Activated CD8-positive, alpha-beta T cell treated with anti-CD3 and anti-CD28 coated beads for 36 hours (primary cell): ENCODE measurements at regions of chr15 and their contacts with region 1.

Region 1: DNA sequence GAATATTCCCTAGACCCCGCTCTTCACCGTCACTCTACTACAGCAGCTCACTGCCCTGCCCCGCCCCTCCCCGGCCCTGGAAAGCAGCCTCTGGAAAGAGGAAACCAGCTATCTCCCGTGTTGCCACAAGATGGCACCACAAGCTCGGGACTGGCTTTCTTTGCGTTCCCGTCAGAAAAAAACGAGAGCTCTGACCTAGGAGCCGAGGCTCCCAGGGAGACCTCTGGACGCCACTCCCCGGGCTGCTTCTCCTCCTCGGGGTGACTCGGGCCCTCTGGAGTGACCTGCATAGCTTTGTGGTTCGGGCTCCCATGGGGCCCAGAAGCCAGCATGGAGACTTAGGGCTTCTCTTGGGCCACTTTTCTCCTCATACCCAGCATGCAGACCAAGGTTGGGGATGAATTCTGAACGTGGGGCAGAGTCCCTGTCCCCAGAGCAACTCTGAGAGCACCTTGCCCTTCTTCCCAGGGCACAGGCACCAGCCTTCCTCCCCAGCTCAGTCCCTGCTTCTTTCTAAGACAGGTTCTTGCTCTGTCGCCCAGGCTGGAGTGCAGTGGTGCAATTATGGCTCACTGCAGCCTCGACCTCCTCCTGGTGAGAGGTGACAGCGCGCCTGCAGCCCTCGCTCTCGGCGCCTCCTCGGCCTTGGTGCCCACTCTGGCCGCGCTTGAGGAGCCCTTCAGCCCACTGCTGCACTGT is 19.0 kb downstream of the STOML1 start:
- DNase-seq: peak; percentile 91
- ATAC-seq: peak; percentile 85
- H3K4me3 Mint-ChIP-seq: no peak overlapping the region
- H3K27ac Mint-ChIP-seq: no peak overlapping the region
- H3K4me1 Mint-ChIP-seq: peaks cover 23% of the 10 kb centered on the region
- H3K27me3 Mint-ChIP-seq: peaks cover 15% of the 10 kb centered on the region
- CTCF ChIP-seq: peak; percentile 72

Region 2: GRCh38 chr15:73697033-73697467 is 276.1 kb before region 1 on chr15:
- CTCF ChIA-PET with region 1: no interaction called
- POLR2A ChIA-PET with region 1: no interaction called
- intact Hi-C with region 1: no loop called
- DNase-seq: peak; percentile 92
- ATAC-seq: peak; percentile 93
- H3K4me3 Mint-ChIP-seq: no peak overlapping the region
- H3K27ac Mint-ChIP-seq: no peak overlapping the region
- H3K4me1 Mint-ChIP-seq: peaks cover 19% of the 10 kb centered on the region
- H3K27me3 Mint-ChIP-seq: peaks cover 58% of the 10 kb centered on the region
- CTCF ChIP-seq: no peak

Region 3: GRCh38 chr15:73936181-73936580 is 37.0 kb before region 1 on chr15:
- CTCF ChIA-PET with region 1: interaction called, 11 read pairs
- POLR2A ChIA-PET with region 1: no interaction called
- intact Hi-C with region 1: no loop called
- DNase-seq: no peak
- ATAC-seq: no peak
- H3K4me3 Mint-ChIP-seq: no peak overlapping the region
- H3K27ac Mint-ChIP-seq: no peak overlapping the region
- H3K4me1 Mint-ChIP-seq: no peaks in the 10 kb centered on the region
- H3K27me3 Mint-ChIP-seq: peaks cover 2% of the 10 kb centered on the region
- CTCF ChIP-seq: no peak

Region 4: DNA sequence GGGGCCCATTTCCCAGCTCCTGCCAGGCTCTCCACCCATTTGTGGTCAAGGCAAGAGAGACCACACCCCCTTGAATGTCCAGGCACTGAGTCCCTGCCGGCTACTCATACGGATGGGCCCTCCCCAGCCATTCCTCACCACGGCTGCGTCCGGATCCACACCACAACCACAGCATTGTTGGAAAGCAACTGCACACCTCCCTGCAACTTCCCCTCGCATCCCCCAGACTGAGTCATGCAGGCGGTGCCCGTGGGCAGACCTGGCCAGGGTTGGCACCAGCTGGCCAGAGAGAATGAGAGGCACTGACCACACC is 16.4 kb before region 1 on chr15:
- CTCF ChIA-PET with region 1: interaction called, 23 read pairs
- POLR2A ChIA-PET with region 1: interaction called, 4 read pairs
- intact Hi-C with region 1: no loop called
- DNase-seq: no peak
- ATAC-seq: no peak
- H3K4me3 Mint-ChIP-seq: no peak overlapping the region
- H3K27ac Mint-ChIP-seq: no peak overlapping the region
- H3K4me1 Mint-ChIP-seq: peaks cover 20% of the 10 kb centered on the region
- H3K27me3 Mint-ChIP-seq: no peaks in the 10 kb centered on the region
- CTCF ChIP-seq: no peak

Region 5: GRCh38 chr15:74011610-74012009 is 38.5 kb after region 1 on chr15:
- CTCF ChIA-PET with region 1: interaction called, 14 read pairs
- POLR2A ChIA-PET with region 1: interaction called, 5 read pairs
- intact Hi-C with region 1: no loop called
- DNase-seq: no peak
- ATAC-seq: no peak
- H3K4me3 Mint-ChIP-seq: no peak overlapping the region
- H3K27ac Mint-ChIP-seq: no peak overlapping the region
- H3K4me1 Mint-ChIP-seq: peaks cover 45% of the 10 kb centered on the region
- H3K27me3 Mint-ChIP-seq: no peaks in the 10 kb centered on the region
- CTCF ChIP-seq: no peak

Region 6: GRCh38 chr15:74044267-74045110 is 71.4 kb after region 1 on chr15:
- CTCF ChIA-PET with region 1: interaction called, 72 read pairs
- POLR2A ChIA-PET with region 1: no interaction called
- intact Hi-C with region 1: loop called (anchors 5 kb)
- DNase-seq: no peak
- ATAC-seq: no peak
- H3K4me3 Mint-ChIP-seq: no peak overlapping the region
- H3K27ac Mint-ChIP-seq: no peak overlapping the region
- H3K4me1 Mint-ChIP-seq: peaks cover 7% of the 10 kb centered on the region
- H3K27me3 Mint-ChIP-seq: no peaks in the 10 kb centered on the region
- CTCF ChIP-seq: no peak

Region 7: DNA sequence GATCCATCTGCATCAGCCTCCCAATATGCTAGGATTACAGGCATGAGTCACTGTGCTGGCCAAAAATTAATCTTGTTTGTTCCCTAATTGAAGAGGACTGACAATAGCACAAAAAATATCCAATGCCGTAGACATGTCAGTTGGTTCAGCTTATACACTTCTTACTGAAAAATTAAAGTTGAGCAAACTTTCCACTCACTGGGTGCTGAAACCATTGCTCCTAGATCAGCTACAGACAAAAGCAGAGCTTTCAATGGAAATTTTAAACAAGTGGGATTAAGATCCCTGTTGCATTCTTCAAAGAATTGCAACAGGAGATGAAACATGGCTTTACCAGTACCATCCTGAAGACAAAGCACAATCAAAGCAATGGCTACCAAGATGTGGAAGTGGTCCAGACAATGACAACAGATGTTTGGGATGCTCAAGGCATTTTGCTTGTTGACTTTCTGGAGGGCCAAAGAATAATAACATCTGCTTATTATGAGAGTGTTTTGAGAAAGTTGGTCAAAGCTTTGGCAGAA is 173.2 kb after region 1 on chr15:
- CTCF ChIA-PET with region 1: no interaction called
- POLR2A ChIA-PET with region 1: no interaction called
- intact Hi-C with region 1: no loop called
- DNase-seq: no peak
- ATAC-seq: no peak
- H3K4me3 Mint-ChIP-seq: no peak overlapping the region
- H3K27ac Mint-ChIP-seq: no peak overlapping the region
- H3K4me1 Mint-ChIP-seq: no peaks in the 10 kb centered on the region
- H3K27me3 Mint-ChIP-seq: peaks cover 20% of the 10 kb centered on the region
- CTCF ChIP-seq: no peak

Region 8: DNA sequence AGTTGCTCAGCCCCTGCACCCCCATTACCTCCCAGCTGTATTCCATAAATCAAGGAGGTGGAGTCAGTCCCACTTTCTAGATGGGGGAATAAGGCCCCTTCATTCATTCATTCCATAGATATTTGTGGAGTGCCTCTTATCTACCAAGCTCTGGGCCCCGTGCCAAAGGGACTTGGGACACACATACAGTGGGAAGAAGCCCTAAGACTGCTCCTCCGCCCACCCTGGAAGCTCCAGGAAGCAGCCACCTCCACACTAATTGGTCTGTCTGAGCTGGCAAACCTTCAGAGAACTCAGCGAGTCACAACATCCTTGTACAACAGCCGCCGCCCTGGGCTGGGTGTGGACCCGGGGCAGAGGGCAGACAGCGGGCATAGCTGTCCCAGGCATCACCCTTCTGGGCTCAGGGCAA is 223.1 kb after region 1 on chr15:
- CTCF ChIA-PET with region 1: no interaction called
- POLR2A ChIA-PET with region 1: no interaction called
- intact Hi-C with region 1: no loop called
- DNase-seq: no peak
- ATAC-seq: no peak
- H3K4me3 Mint-ChIP-seq: no peak overlapping the region
- H3K27ac Mint-ChIP-seq: no peak overlapping the region
- H3K4me1 Mint-ChIP-seq: peaks cover 4% of the 10 kb centered on the region
- H3K27me3 Mint-ChIP-seq: no peaks in the 10 kb centered on the region
- CTCF ChIP-seq: no peak

Region 9: DNA sequence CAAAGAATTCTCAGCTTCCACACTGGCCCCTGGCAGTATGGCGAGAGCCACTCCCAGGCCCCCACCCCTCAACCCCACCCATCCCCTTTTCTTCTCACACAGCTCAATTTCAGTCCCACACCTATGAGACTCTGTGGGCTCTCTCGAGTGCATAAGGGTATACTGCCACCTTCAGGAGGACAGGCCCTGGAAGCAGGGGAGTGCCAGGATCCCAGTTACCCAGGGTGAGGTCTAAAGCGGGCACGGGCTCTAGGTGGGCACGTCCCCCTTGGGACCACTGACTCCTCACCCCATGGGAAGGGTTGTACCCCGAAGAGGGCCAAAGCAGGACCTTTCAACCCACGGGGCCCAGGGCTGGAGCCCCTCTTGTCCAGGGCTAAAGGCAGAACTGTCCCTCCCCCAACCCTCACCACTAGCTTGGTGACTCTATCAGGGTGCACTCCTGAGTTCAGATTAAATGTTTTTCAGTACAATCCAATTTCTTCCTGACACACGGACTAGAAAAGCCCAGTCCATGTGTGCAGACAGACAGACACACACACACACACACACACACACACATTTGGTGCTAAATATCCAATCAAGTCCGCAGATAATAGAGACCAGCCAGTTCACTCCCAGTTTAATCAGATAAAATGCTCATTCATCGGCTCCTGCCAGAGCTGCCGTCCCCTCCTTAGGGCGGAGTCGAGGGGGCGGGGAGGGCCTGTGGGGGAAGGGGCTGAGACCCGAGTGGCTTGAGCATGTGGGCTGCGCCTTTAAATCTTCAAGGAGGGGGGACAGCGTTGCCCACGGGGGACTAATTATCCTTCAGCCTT is 334.9 kb after region 1 on chr15:
- CTCF ChIA-PET with region 1: interaction called, 4 read pairs
- POLR2A ChIA-PET with region 1: no interaction called
- intact Hi-C with region 1: loop called (anchors 10 kb)
- DNase-seq: peak; percentile 68
- ATAC-seq: peak; percentile 84
- H3K4me3 Mint-ChIP-seq: no peak overlapping the region
- H3K27ac Mint-ChIP-seq: no peak overlapping the region
- H3K4me1 Mint-ChIP-seq: no peaks in the 10 kb centered on the region
- H3K27me3 Mint-ChIP-seq: peaks cover 8% of the 10 kb centered on the region
- CTCF ChIP-seq: peak; percentile 56

Region 10: DNA sequence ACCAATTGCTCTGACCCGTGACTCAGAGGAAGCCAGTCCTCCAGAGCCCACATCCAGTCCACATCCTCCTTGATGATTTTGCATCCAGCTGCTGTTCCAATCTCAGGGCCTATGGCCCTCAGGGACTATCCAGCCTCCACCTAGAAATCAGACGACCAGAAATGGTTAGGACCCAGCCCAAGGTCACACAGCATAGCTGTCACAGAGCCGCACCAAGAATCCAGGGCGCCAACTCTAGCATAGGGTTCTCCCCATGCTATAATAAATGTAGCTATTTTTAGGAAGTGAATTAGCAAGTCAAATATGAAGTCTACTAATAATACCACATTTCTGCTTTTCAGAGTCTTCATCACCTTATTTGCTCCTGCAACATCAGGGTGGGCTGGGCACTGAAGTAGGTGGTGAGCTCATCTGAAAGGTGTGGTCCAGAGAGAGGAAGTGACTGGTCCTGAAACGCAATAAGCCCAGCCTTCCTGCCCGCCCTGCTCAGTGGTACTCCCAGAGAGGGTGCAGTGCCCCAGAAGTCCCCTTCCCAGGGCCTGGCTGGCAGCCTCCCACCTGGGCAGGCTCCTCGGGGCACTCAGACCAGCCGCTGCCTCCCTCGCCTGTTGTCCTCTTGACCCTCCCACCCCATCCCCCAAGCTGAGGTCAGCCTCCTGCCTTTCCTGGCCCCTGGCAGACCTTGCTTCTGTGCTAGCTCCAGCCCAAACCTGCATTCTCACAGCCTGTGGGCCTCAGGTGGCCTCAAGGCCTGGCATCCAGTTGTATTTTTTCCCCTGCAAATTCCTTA is 411.9 kb after region 1 on chr15:
- CTCF ChIA-PET with region 1: no interaction called
- POLR2A ChIA-PET with region 1: no interaction called
- intact Hi-C with region 1: no loop called
- DNase-seq: peak; percentile 89
- ATAC-seq: peak; percentile 75
- H3K4me3 Mint-ChIP-seq: peak overlapping the region; percentile 30
- H3K27ac Mint-ChIP-seq: peak overlapping the region; percentile 96
- H3K4me1 Mint-ChIP-seq: peaks cover 72% of the 10 kb centered on the region
- H3K27me3 Mint-ChIP-seq: no peaks in the 10 kb centered on the region
- CTCF ChIP-seq: no peak